ENCODE measurements at regions of chr4 and their contacts with region 1.

Region 1: GRCh38 chr4:113547487-113548042 is 214.0 kb downstream of the CAMK2D start:
- DNase-seq: peak; percentile 96
- H3K4me3 Mint-ChIP-seq: peak overlapping the region; percentile 17
- H3K27ac Mint-ChIP-seq: peak overlapping the region; percentile 25
- H3K4me1 Mint-ChIP-seq: peaks cover 23% of the 10 kb centered on the region
- H3K27me3 Mint-ChIP-seq: no peaks in the 10 kb centered on the region

Region 2: DNA sequence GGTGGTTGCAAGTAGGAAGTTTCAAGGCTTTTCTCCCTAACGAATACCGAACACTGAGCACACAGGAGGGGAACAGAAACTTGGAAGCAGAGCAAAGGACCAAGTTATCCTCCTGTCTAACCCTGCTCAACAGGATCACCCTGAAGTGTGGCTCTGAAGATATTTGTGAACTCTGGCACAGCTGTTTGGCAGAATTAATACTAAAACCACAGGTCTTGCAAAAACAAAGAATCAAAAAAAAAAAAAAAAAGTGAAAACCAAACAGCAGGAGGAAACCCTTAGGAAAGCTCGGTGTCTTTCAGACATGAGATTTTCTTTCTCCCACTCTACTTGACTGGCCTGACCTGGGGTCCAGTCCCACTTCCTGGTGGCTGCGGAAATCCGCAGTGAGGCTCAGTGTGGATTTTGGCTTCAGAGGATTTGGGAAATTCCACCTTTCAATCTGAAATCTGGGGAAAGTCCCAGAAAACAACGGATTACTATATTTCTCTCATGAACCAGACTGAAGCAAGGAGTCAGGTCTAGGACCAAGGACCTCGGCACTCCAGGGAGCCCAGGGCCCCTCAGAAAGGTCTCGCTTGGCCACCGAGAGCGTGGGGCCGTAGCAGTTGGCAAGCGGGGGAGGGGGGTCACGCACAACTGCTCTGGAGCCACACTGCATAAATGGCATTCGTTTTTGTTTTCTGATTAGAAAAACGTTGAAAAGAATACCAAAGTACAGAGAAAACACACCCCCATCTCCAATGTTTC is 1262.7 kb before region 1 on chr4:
- intact Hi-C with region 1: loop called (anchors 5 kb)
- DNase-seq: peak; percentile 74
- H3K4me3 Mint-ChIP-seq: peak overlapping the region; percentile 95
- H3K27ac Mint-ChIP-seq: peak overlapping the region; percentile 94
- H3K4me1 Mint-ChIP-seq: peaks cover 77% of the 10 kb centered on the region
- H3K27me3 Mint-ChIP-seq: no peaks in the 10 kb centered on the region

Region 3: GRCh38 chr4:113474017-113474416 is 73.5 kb before region 1 on chr4:
- intact Hi-C with region 1: loop called (anchors 1 kb)
- DNase-seq: no peak
- H3K4me3 Mint-ChIP-seq: no peak overlapping the region
- H3K27ac Mint-ChIP-seq: peak overlapping the region; percentile 79
- H3K4me1 Mint-ChIP-seq: peaks cover 27% of the 10 kb centered on the region
- H3K27me3 Mint-ChIP-seq: no peaks in the 10 kb centered on the region

Region 4: DNA sequence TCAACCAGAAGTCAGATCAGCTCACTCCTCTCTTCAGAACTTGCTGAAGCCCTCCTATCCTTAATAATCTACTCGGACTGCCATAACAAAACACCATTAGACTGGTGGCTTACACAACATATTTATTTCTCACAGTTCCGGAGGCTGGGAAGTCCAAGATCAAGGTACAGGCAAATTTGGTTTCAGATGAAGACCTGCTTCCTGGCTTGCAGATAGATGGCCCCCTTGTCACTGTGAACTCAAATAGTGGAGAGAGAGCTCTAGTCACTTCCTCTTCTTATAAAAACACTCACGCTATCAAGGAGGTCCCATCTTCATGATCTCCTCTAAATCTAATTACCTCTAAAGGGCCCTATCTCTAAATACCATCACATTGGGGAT is 88.9 kb after region 1 on chr4:
- intact Hi-C with region 1: loop called (anchors 1 kb)
- DNase-seq: peak; percentile 71
- H3K4me3 Mint-ChIP-seq: peak overlapping the region; percentile 69
- H3K27ac Mint-ChIP-seq: peak overlapping the region; percentile 73
- H3K4me1 Mint-ChIP-seq: peaks cover 48% of the 10 kb centered on the region
- H3K27me3 Mint-ChIP-seq: no peaks in the 10 kb centered on the region

Region 5: GRCh38 chr4:113823291-113823659 is 275.7 kb after region 1 on chr4:
- intact Hi-C with region 1: loop called (anchors 2 kb)
- DNase-seq: no peak
- H3K4me3 Mint-ChIP-seq: no peak overlapping the region
- H3K27ac Mint-ChIP-seq: no peak overlapping the region
- H3K4me1 Mint-ChIP-seq: peaks cover 24% of the 10 kb centered on the region
- H3K27me3 Mint-ChIP-seq: no peaks in the 10 kb centered on the region